ENCODE measurements at regions of chr7 and their contacts with region 1.

Region 1: GRCh38 chr7:150962553-150963399 is 15.3 kb downstream of the KCNH2 start:
- DNase-seq: no peak
- H3K4me3 ChIP-seq: no peak overlapping the region
- H3K27ac ChIP-seq: no peak overlapping the region
- H3K27me3 ChIP-seq: peaks cover 27% of the 10 kb centered on the region
- CTCF ChIP-seq: peak; percentile 91

Region 2: DNA sequence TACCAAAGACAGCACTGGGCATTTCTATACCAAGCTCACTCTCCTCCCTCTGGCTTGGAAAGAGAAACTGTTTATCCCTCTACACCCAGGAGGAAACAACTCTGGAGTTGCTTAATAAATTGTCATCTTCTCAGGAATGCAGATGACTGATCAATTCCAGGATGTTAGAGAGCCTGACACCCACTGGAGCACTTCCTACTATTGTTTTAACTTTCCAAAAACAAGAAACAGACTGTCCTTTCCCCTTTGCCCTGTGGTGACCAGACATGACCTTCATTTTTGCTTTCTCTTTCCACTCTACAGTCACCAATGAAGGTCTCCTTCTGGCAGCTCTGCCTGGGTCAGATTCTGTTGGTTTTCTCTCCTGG is 376.0 kb before region 1 on chr7:
- CTCF ChIA-PET with region 1: no interaction called
- POLR2A ChIA-PET with region 1: no interaction called
- DNase-seq: no peak
- H3K4me3 ChIP-seq: no peak overlapping the region
- H3K27ac ChIP-seq: no peak overlapping the region
- H3K27me3 ChIP-seq: no peaks in the 10 kb centered on the region
- CTCF ChIP-seq: no peak

Region 3: GRCh38 chr7:150830937-150831336 is 131.8 kb before region 1 on chr7:
- CTCF ChIA-PET with region 1: no interaction called
- POLR2A ChIA-PET with region 1: no interaction called
- DNase-seq: no peak
- H3K4me3 ChIP-seq: no peak overlapping the region
- H3K27ac ChIP-seq: no peak overlapping the region
- H3K27me3 ChIP-seq: no peaks in the 10 kb centered on the region
- CTCF ChIP-seq: no peak

Region 4: DNA sequence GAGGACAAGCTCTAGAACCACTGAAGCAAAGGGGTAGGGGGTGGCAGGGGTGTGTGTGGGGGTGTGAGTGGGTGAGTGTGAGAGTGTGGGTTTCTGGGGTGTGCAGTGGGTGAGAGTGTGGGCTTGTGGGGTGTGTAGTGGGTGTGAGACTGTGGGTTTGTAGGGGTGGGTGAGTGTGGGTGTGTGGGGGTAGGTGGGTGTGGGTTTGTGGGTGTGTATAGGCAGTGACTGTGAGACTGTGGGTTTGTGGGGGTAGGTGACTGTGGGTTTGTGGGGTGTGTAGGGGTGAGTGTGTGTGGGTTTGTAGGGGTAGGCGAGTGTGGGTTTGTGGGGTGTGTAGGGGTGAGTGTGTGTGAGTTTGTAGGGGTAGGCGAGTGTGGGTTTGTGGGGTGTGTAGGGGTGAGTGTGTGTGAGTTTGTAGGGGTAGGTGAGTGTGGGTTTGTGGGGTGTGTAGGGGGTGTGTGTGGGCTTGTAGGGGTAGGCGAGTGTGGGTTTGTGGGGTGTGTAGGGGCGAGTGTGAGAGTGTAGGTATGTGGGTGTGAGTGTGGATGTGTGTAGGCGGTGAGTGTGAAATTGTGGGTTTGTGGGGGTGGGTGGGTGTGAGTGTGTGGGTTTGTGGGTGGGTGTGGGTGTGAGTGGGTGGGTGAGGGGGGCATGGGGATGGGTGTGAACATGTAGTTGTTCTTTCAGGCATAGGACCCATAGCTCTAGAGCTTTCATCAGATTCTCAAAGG is 36.9 kb after region 1 on chr7:
- CTCF ChIA-PET with region 1: interaction called, 4 read pairs
- POLR2A ChIA-PET with region 1: interaction called, 10 read pairs
- DNase-seq: no peak
- H3K4me3 ChIP-seq: no peak overlapping the region
- H3K27ac ChIP-seq: no peak overlapping the region
- H3K27me3 ChIP-seq: peaks cover 9% of the 10 kb centered on the region
- CTCF ChIP-seq: no peak

Region 5: DNA sequence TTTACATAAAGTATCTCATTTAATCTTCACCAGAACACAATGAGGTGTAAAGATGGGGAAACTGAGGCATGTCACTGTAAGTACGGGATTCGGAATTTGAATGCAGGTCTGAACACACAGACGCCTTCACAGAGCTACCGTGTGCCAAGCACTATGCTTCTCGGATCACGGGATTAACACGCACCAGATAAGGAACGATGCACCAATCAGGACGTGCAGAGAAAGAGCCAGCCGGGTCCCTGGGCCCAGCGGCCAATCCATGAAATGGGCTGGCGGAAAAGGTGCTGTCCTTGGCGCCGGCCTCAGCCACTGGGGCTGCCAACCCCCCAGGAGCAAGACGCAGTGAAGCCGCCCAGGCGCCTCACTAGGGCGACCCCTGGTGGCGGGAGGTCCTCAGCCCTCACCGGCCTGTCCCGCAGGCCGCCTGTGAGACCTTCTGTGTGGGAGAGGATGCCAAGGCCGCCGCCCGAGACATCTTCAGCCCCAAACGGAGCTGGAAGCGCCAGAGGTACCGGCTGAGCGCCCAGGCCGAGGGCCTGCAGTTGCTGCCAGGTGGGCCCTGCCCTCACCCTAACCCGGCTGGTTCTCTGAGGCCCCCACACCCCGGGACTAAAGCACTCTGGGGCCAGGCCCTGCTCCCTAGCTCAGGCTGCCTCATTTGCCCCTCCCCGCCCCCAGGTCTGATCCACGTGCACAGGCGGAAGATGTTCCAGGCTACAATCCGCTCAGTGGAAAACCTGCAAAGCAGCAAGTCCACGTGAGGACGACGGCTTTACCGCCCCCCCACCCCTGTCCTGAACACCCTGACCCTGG is 45.9 kb after region 1 on chr7:
- CTCF ChIA-PET with region 1: interaction called, 10 read pairs
- POLR2A ChIA-PET with region 1: interaction called, 3 read pairs
- DNase-seq: no peak
- H3K4me3 ChIP-seq: peak overlapping the region; percentile 5; the same call in 1 of the 2 replicates
- H3K27ac ChIP-seq: no peak overlapping the region
- H3K27me3 ChIP-seq: peaks cover 8% of the 10 kb centered on the region
- CTCF ChIP-seq: peak; percentile 58

Region 6: GRCh38 chr7:151028131-151028947 is 65.6 kb after region 1 on chr7 and contains the start of gene ABCB8:
- CTCF ChIA-PET with region 1: interaction called, 10 read pairs
- POLR2A ChIA-PET with region 1: no interaction called
- DNase-seq: peak; percentile 96
- H3K4me3 ChIP-seq: peak within 1 kb of the TSS; percentile 90
- H3K27ac ChIP-seq: peak within 1 kb of the TSS; percentile 39
- H3K27me3 ChIP-seq: peaks cover 5% of the 10 kb centered on the region
- CTCF ChIP-seq: peak; percentile 46
- polyA plus RNA-seq, gene ABCB8: 10.7 and 13.7 TPM in 2 replicates